Activated naive CD8-positive, alpha-beta T cell treated with anti-CD3 and anti-CD28 coated beads, Interleukin-2, amount 10 ng/mL, durations not matched to agents 7 days and 5 days (primary cell): ENCODE measurements at regions of chr15 and their contacts with region 1.

Region 1: DNA sequence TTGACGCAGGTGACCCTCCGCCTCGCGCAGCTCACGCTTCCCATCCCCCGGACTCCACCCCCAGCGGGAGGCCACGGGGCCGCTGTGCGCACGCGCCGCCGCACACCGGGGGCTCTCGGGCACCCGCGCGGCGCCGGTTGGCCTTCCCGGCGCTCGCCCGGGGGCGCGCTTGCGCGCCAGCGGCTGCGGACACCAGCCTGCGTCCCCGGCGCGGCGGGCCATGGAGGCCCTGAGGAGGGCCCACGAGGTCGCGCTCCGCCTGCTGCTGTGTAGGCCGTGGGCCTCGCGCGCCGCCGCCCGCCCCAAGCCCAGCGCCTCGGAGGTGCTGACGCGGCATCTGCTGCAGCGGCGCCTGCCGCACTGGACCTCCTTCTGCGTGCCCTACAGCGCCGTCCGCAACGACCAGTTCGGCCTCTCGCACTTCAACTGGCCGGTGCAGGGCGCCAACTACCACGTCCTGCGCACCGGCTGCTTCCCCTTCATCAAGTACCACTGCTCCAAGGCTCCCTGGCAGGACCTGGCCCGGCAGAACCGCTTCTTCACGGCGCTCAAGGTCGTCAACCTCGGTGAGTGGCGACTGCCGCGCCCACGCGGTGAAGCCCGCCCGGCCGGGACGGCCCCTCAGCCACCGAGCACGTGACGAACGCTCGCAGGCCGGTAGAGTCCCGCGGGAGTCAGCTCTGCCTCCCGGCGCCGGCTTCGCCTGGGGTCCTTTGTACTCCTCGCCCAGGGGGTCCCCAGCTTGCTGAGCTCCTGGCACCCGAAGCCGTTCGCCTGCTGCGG is at the start of gene C15orf61:
- DNase-seq: peak; percentile 93
- ATAC-seq: peak; percentile 83
- H3K4me3 Mint-ChIP-seq: peak within 1 kb of the TSS; percentile 85
- H3K27ac Mint-ChIP-seq: peak within 1 kb of the TSS; percentile 97
- H3K4me1 Mint-ChIP-seq: peaks cover 18% of the 10 kb centered on the region
- H3K27me3 Mint-ChIP-seq: no peaks in the 10 kb centered on the region
- total RNA-seq, gene C15orf61: 5.5 to 7.6 TPM

Region 2: GRCh38 chr15:67405208-67406191 is 115.7 kb before region 1 on chr15:
- POLR2A ChIA-PET with region 1: no interaction called
- DNase-seq: no peak
- ATAC-seq: no peak
- H3K4me3 Mint-ChIP-seq: no peak overlapping the region
- H3K27ac Mint-ChIP-seq: no peak overlapping the region
- H3K4me1 Mint-ChIP-seq: peaks cover 6% of the 10 kb centered on the region
- H3K27me3 Mint-ChIP-seq: no peaks in the 10 kb centered on the region

Region 3: GRCh38 chr15:67510597-67511225 is 10.5 kb before region 1 on chr15:
- POLR2A ChIA-PET with region 1: interaction called, 12 read pairs
- DNase-seq: no peak
- ATAC-seq: no peak
- H3K4me3 Mint-ChIP-seq: no peak overlapping the region
- H3K27ac Mint-ChIP-seq: no peak overlapping the region
- H3K4me1 Mint-ChIP-seq: peaks cover 23% of the 10 kb centered on the region
- H3K27me3 Mint-ChIP-seq: no peaks in the 10 kb centered on the region

Region 4: GRCh38 chr15:67542420-67543347 is 21.5 kb after region 1 on chr15 and contains the start of gene MAP2K5:
- POLR2A ChIA-PET with region 1: interaction called, 22 read pairs
- DNase-seq: peak; percentile 88
- ATAC-seq: peak; percentile 70
- H3K4me3 Mint-ChIP-seq: peak within 1 kb of the TSS; percentile 94
- H3K27ac Mint-ChIP-seq: peak within 1 kb of the TSS; percentile 97
- H3K4me1 Mint-ChIP-seq: peaks cover 42% of the 10 kb centered on the region
- H3K27me3 Mint-ChIP-seq: no peaks in the 10 kb centered on the region
- total RNA-seq, gene MAP2K5: 25.8 to 29.9 TPM